OCI-LY7 (cell line): ENCODE measurements at regions of chr7 and their contacts with region 1.

Region 1: GRCh38 chr7:130982160-130982638 is 248.2 kb upstream of the KLF14 start:
- DNase-seq: peak; percentile 40
- H3K4me3 ChIP-seq: no peak overlapping the region
- H3K27ac ChIP-seq: peak overlapping the region; percentile 16
- H3K4me1 ChIP-seq: peaks cover 3% of the 10 kb centered on the region
- CTCF ChIP-seq: peak; percentile 83

Region 2: DNA sequence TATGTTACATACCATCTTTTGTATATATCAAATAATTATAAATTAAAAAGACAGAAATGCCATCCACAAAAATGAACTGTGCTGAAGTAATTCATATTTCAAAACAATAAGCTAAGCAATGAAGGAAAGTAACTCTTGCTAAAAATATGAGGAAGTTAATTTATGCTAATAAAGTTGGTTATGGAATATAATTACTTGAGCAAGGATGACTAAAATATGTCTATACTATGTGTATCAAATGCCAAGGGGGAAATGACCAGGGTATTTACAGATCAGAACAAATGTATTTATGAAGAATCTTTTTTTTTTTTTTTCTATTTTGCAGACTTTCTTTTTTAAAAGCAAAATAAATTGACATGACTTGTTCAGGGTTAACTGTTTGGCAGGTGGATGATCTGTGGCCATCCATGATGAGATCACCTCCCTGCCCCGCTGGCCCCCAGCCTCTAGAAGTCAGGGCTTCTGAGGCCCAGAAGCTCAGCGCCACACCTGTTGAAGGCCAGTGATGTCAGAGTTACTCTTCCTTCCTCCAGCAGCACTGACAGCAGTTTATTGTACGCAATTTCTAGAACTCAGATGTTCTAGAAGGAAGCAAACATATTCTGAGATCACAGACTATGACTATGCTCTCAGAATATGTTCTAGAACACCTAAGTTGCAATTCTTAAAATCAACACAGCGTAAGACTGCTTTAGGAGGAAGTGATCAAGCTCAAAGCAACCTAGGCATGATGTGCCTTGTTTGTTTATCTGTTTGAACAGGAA is 52.1 kb before region 1 on chr7:
- CTCF ChIA-PET with region 1: no interaction called
- POLR2A ChIA-PET with region 1: no interaction called
- intact Hi-C with region 1: no loop called
- DNase-seq: no peak
- H3K4me3 ChIP-seq: no peak overlapping the region
- H3K27ac ChIP-seq: no peak overlapping the region
- H3K4me1 ChIP-seq: peaks cover 6% of the 10 kb centered on the region
- CTCF ChIP-seq: no peak

Region 3: GRCh38 chr7:131040467-131040932 is 58.3 kb after region 1 on chr7:
- CTCF ChIA-PET with region 1: interaction called, 5 read pairs
- POLR2A ChIA-PET with region 1: interaction called, 4 read pairs
- intact Hi-C with region 1: loop called (anchors 2 kb)
- DNase-seq: peak; percentile 53
- H3K4me3 ChIP-seq: no peak overlapping the region
- H3K27ac ChIP-seq: no peak overlapping the region
- H3K4me1 ChIP-seq: peaks cover 3% of the 10 kb centered on the region
- CTCF ChIP-seq: peak; percentile 87

Region 4: GRCh38 chr7:131302876-131303707 is 320.9 kb after region 1 on chr7:
- CTCF ChIA-PET with region 1: no interaction called
- POLR2A ChIA-PET with region 1: interaction called, 3 read pairs
- intact Hi-C with region 1: loop called (anchors 2 kb)
- DNase-seq: peak; percentile 37
- H3K4me3 ChIP-seq: no peak overlapping the region
- H3K27ac ChIP-seq: no peak overlapping the region
- H3K4me1 ChIP-seq: peaks cover 6% of the 10 kb centered on the region
- CTCF ChIP-seq: peak; percentile 74

Region 5: GRCh38 chr7:131424219-131424822 is 442.1 kb after region 1 on chr7:
- CTCF ChIA-PET with region 1: no interaction called
- POLR2A ChIA-PET with region 1: interaction called, 3 read pairs
- intact Hi-C with region 1: loop called (anchors 10 kb)
- DNase-seq: peak; percentile 64
- H3K4me3 ChIP-seq: no peak overlapping the region
- H3K27ac ChIP-seq: no peak overlapping the region
- H3K4me1 ChIP-seq: peaks cover 7% of the 10 kb centered on the region
- CTCF ChIP-seq: peak; percentile 79